ENCODE measurements at regions of chr2 and their contacts with region 1.

Region 1: GRCh38 chr2:168650781-168651180 is 151.7 kb upstream of the NOSTRIN start:
- DNase-seq: no peak
- ATAC-seq: no peak
- H3K4me3 ChIP-seq: no peak overlapping the region
- H3K4me3 Mint-ChIP-seq: no peak overlapping the region
- H3K27ac ChIP-seq: no peak overlapping the region
- H3K27ac Mint-ChIP-seq: peak overlapping the region in 1 of 9 donors; percentile 48
- H3K4me1 ChIP-seq: peaks cover 0 to 10% of the 10 kb centered on the region in 2 donors
- H3K4me1 Mint-ChIP-seq: peaks cover 0 to 23% (median 12%) of the 10 kb centered on the region in 7 donors
- H3K27me3 ChIP-seq: no peaks in the 10 kb centered on the region
- H3K27me3 Mint-ChIP-seq: no peaks in the 10 kb centered on the region

Region 2: DNA sequence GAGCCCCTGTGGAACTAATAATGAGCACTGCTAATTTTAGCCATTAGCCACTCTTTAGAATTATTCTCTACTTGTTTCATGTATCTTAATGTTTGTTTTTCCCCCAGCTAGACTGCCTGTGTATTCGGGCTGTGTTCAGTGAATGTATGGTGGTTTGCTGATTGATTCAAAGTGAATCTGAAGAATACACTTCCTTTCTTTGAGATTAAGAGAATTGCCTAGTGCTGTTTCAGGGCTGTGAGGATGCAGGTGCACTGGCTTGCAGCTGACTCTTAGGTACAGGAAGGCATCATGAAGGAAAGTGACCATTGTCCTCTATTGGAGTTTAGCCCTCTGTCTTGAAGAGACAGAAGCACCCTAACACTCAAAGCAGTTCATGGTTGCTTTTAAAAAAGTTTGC is 56.0 kb before region 1 on chr2:
- CTCF ChIA-PET with region 1: no interaction called
- POLR2A ChIA-PET with region 1: no interaction called
- intact Hi-C with region 1: no loop called
- DNase-seq: no peak
- ATAC-seq: no peak
- H3K4me3 ChIP-seq: no peak overlapping the region
- H3K4me3 Mint-ChIP-seq: peak overlapping the region in 6 of 10 donors; percentile 8 to 56 (median 36)
- H3K27ac ChIP-seq: no peak overlapping the region
- H3K27ac Mint-ChIP-seq: peak overlapping the region in 3 of 9 donors; percentile 8 to 63 (median 13)
- H3K4me1 ChIP-seq: peaks cover 0 to 14% of the 10 kb centered on the region in 2 donors
- H3K4me1 Mint-ChIP-seq: peaks cover 12 to 71% (median 50%) of the 10 kb centered on the region in 7 donors
- H3K27me3 ChIP-seq: no peaks in the 10 kb centered on the region
- H3K27me3 Mint-ChIP-seq: no peaks in the 10 kb centered on the region

Region 3: GRCh38 chr2:168663993-168664392 is 13.2 kb after region 1 on chr2:
- CTCF ChIA-PET with region 1: interaction called, 3 read pairs
- POLR2A ChIA-PET with region 1: no interaction called
- intact Hi-C with region 1: loop called in 1 of 2 experiments (anchors 2 kb)
- DNase-seq: no peak
- ATAC-seq: no peak
- H3K4me3 ChIP-seq: no peak overlapping the region
- H3K4me3 Mint-ChIP-seq: peak overlapping the region in 1 of 10 donors; percentile 30
- H3K27ac ChIP-seq: no peak overlapping the region
- H3K27ac Mint-ChIP-seq: peak overlapping the region in 4 of 9 donors; percentile 1 to 59 (median 41)
- H3K4me1 ChIP-seq: peaks cover 0 to 2% of the 10 kb centered on the region in 2 donors
- H3K4me1 Mint-ChIP-seq: peaks cover 4 to 56% (median 40%) of the 10 kb centered on the region in 7 donors
- H3K27me3 ChIP-seq: no peaks in the 10 kb centered on the region
- H3K27me3 Mint-ChIP-seq: no peaks in the 10 kb centered on the region

Region 4: DNA sequence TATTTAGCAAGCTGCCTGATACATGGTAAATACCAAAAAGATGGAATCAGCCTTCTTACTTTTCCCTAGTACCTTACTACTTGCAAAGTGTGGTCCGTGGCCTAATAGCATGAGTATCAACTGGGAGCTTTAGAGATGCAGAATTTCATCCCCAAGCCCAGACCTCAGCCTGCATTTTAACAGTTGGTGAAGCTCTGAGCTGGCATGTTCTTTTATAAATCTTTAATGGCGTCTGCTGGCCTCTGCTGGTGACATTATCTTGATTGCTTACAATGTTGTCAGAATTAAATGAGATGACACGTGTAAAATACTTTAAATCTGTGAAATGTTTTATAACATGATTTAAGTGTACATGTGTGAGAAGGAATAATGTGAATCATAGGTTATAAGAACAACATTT is 36.5 kb after region 1 on chr2:
- CTCF ChIA-PET with region 1: no interaction called
- POLR2A ChIA-PET with region 1: no interaction called
- intact Hi-C with region 1: no loop called
- DNase-seq: peak in 7 of 9 donors; percentile 12 to 50 (median 31)
- ATAC-seq: no peak
- H3K4me3 ChIP-seq: no peak overlapping the region
- H3K4me3 Mint-ChIP-seq: no peak overlapping the region
- H3K27ac ChIP-seq: no peak overlapping the region
- H3K27ac Mint-ChIP-seq: no peak overlapping the region
- H3K4me1 ChIP-seq: no peaks in the 10 kb centered on the region
- H3K4me1 Mint-ChIP-seq: peaks cover 3 to 28% (median 9%) of the 10 kb centered on the region in 7 donors
- H3K27me3 ChIP-seq: no peaks in the 10 kb centered on the region
- H3K27me3 Mint-ChIP-seq: no peaks in the 10 kb centered on the region